Activated CD4-positive, alpha-beta memory T cell treated with anti-CD3 and anti-CD28 coated beads, Interleukin-2, amount 10 ng/mL, durations not matched to agents 7 days and 5 days (primary cell): ENCODE measurements at regions of chr17 and their contacts with region 1.

Region 1: GRCh38 chr17:17280613-17281549 is at the start of gene COPS3:
- DNase-seq: peak; percentile 98
- H3K4me3 Mint-ChIP-seq: peak within 1 kb of the TSS; percentile 89
- H3K27ac Mint-ChIP-seq: peak within 1 kb of the TSS; percentile 88
- H3K4me1 Mint-ChIP-seq: peaks cover 41% of the 10 kb centered on the region
- H3K27me3 Mint-ChIP-seq: peaks cover 2% of the 10 kb centered on the region
- total RNA-seq, gene COPS3: 99.9 to 109 TPM

Region 2: DNA sequence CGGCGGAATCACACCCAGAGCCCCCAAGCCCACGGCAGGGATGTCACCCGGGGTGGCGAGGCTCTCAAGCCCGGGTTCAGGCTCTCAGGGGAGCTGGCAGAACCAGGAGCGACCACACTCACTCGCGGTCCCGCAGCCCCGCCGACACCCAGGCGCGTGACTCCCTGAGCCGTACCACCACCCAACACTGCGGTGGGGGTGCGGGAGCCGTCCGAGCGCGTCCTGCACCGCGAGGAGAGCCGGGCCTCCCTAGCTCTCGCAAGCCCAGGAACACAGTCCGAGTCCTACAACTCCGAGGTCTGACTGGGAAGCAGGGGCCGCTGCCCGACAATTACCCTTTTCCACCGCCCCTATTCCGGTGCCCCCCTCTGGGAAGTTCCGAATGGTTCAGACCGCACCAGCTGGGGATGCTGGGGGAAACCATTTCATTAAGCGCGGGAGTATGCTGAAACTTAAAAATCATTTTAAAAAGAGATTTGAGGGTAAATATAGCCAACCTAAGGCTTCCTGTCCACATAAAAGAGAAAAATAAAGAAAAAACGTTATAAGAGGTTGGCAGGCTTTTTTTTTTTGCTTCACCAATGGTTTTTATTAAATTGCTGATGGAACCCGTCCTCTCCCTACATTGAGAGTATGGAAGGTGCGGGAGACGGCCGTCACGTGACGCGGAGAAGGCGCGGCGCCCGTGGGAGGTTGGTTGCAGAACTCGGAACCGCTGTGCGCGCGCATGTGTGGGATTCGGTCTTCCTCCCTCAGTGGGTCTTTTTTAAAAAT is 43.7 kb before region 1 on chr17 and contains the start of gene FLCN:
- CTCF ChIA-PET with region 1: interaction called, 4 read pairs
- POLR2A ChIA-PET with region 1: interaction called, 26 read pairs
- DNase-seq: peak; percentile 89
- H3K4me3 Mint-ChIP-seq: peak within 1 kb of the TSS; percentile 96
- H3K27ac Mint-ChIP-seq: peak within 1 kb of the TSS; percentile 91
- H3K4me1 Mint-ChIP-seq: peaks cover 37% of the 10 kb centered on the region
- H3K27me3 Mint-ChIP-seq: no peaks in the 10 kb centered on the region
- total RNA-seq, gene FLCN: 48.8 to 53.1 TPM

Region 3: GRCh38 chr17:17252149-17252661 is 28.7 kb before region 1 on chr17:
- CTCF ChIA-PET with region 1: no interaction called
- POLR2A ChIA-PET with region 1: interaction called, 10 read pairs
- DNase-seq: no peak
- H3K4me3 Mint-ChIP-seq: no peak overlapping the region
- H3K27ac Mint-ChIP-seq: no peak overlapping the region
- H3K4me1 Mint-ChIP-seq: peaks cover 7% of the 10 kb centered on the region
- H3K27me3 Mint-ChIP-seq: no peaks in the 10 kb centered on the region

Region 4: GRCh38 chr17:17269926-17270773 is 10.7 kb before region 1 on chr17:
- CTCF ChIA-PET with region 1: interaction called, 23 read pairs
- POLR2A ChIA-PET with region 1: interaction called, 7 read pairs
- DNase-seq: peak; percentile 37
- H3K4me3 Mint-ChIP-seq: no peak overlapping the region
- H3K27ac Mint-ChIP-seq: no peak overlapping the region
- H3K4me1 Mint-ChIP-seq: no peaks in the 10 kb centered on the region
- H3K27me3 Mint-ChIP-seq: no peaks in the 10 kb centered on the region

Region 5: GRCh38 chr17:17303010-17303846 is 22.3 kb after region 1 on chr17 and contains the start of gene NT5M:
- CTCF ChIA-PET with region 1: interaction called, 3 read pairs
- POLR2A ChIA-PET with region 1: interaction called, 38 read pairs
- DNase-seq: peak; percentile 81
- H3K4me3 Mint-ChIP-seq: peak within 1 kb of the TSS; percentile 82
- H3K27ac Mint-ChIP-seq: peak within 1 kb of the TSS; percentile 93
- H3K4me1 Mint-ChIP-seq: peaks cover 44% of the 10 kb centered on the region
- H3K27me3 Mint-ChIP-seq: peaks cover 2% of the 10 kb centered on the region
- total RNA-seq, gene NT5M: 8.4 to 9.7 TPM